ENCODE measurements at regions of chr22 and their contacts with region 1.

Region 1: GRCh38 chr22:36461669-36462649 is 19.5 kb downstream of the TXN2 start:
- DNase-seq: peak; percentile 55 to 75
- H3K4me3 ChIP-seq: no peak overlapping the region
- H3K27ac ChIP-seq: peak overlapping the region; percentile 96 to 97
- H3K4me1 ChIP-seq: peaks cover 0 to 15% of the 10 kb centered on the region in 2 donors
- H3K27me3 ChIP-seq: no peaks in the 10 kb centered on the region
- CTCF ChIP-seq: no peak
- POLR2A ChIP-seq: peak in 1 of 2 donors; percentile 24

Region 2: DNA sequence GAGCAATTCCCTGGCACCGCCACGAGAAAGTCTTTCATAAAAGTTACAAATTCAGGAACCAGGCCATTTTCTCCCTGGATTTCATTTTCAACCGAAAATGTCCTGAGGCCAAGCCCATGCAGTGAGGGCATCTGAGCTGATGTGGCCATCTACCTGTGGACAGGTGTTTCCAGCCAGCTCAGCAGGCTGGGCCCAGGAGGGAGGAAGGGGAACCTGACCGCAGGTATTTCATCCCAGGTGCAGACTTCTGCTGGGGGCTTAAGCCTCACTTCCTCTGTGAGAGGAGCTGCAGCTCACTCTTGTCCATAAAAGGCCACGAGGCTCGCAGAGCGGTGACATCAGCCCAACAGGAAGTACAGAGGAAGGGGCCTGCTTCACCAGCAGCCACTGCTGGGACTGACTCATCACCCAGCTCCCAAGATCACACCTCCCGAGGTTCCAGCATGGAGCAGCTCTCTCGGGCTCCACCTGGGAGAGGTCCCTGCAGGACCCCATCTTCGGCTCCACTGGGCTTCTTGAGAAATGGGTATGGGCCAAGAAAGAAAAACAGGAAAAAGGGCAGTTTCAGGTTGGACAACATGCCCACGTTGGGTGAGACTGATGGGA is 130.6 kb before region 1 on chr22:
- intact Hi-C with region 1: loop called (anchors 10 kb)
- DNase-seq: peak; percentile 85 to 94
- H3K4me3 ChIP-seq: no peak overlapping the region
- H3K27ac ChIP-seq: peak overlapping the region; percentile 95 to 100
- H3K4me1 ChIP-seq: peaks cover 61 to 75% of the 10 kb centered on the region in 2 donors
- H3K27me3 ChIP-seq: no peaks in the 10 kb centered on the region
- CTCF ChIP-seq: peak in 1 of 4 experiments; percentile 3
- POLR2A ChIP-seq: peak; percentile 71 to 88

Region 3: DNA sequence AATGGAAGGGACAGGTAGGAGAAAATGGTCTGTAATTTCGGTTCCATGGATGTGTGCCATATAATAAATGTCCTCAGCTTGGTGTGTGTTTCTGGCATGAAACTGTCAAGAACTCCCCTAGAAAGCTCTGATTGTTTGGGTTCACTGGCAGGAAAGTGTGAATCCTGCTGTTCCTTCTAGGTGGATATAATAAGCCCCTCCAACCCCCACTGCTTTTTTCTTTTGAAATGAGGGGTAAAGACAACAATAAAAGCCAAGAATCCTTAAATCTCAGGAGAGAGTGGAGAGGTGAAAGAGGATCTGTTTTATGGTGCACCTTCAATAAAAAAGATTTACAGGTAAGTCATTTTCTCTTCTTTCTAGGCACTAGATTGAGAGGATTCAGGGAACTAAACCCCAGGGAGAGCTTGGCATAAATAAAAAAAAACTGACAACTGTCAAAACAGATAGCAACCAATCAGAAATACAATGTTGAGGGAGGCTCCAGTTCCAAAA is 166.7 kb after region 1 on chr22:
- intact Hi-C with region 1: no loop called
- DNase-seq: no peak
- H3K4me3 ChIP-seq: no peak overlapping the region
- H3K27ac ChIP-seq: no peak overlapping the region
- H3K4me1 ChIP-seq: no peaks in the 10 kb centered on the region
- H3K27me3 ChIP-seq: no peaks in the 10 kb centered on the region
- CTCF ChIP-seq: no peak
- POLR2A ChIP-seq: no peak